ENCODE measurements at regions of chrX and their contacts with region 1.

Region 1: GRCh38 chrX:132292793-132293192 is 73.5 kb upstream of the RAP2C start:
- DNase-seq: peak in 2 of 5 donors; percentile 10 to 16
- ATAC-seq: peak; percentile 51 to 73 (median 70)
- H3K4me3 ChIP-seq: peak overlapping the region in 1 of 12 donors; percentile 5
- H3K27ac ChIP-seq: no peak overlapping the region
- H3K4me1 ChIP-seq: peaks cover 0 to 4% (median 0%) of the 10 kb centered on the region in 12 donors
- H3K27me3 ChIP-seq: peaks cover 0 to 15% (median 0%) of the 10 kb centered on the region in 9 donors
- CTCF ChIP-seq: peak; percentile 38 to 79 (median 61)
- POLR2A ChIP-seq: no peak

Region 2: GRCh38 chrX:131854581-131854980 is 438.2 kb before region 1 on chrX:
- intact Hi-C with region 1: loop called in 1 of 10 experiments (anchors 10 kb)
- DNase-seq: no peak
- ATAC-seq: no peak
- H3K4me3 ChIP-seq: no peak overlapping the region
- H3K27ac ChIP-seq: no peak overlapping the region
- H3K4me1 ChIP-seq: no peaks in the 10 kb centered on the region
- H3K27me3 ChIP-seq: peaks cover 0 to 41% (median 0%) of the 10 kb centered on the region in 9 donors
- CTCF ChIP-seq: no peak
- POLR2A ChIP-seq: no peak

Region 3: GRCh38 chrX:132304599-132304998 is 11.8 kb after region 1 on chrX:
- intact Hi-C with region 1: no loop called
- DNase-seq: no peak
- ATAC-seq: no peak
- H3K4me3 ChIP-seq: no peak overlapping the region
- H3K27ac ChIP-seq: no peak overlapping the region
- H3K4me1 ChIP-seq: no peaks in the 10 kb centered on the region
- H3K27me3 ChIP-seq: peaks cover 0 to 7% (median 0%) of the 10 kb centered on the region in 9 donors
- CTCF ChIP-seq: no peak
- POLR2A ChIP-seq: no peak

Region 4: DNA sequence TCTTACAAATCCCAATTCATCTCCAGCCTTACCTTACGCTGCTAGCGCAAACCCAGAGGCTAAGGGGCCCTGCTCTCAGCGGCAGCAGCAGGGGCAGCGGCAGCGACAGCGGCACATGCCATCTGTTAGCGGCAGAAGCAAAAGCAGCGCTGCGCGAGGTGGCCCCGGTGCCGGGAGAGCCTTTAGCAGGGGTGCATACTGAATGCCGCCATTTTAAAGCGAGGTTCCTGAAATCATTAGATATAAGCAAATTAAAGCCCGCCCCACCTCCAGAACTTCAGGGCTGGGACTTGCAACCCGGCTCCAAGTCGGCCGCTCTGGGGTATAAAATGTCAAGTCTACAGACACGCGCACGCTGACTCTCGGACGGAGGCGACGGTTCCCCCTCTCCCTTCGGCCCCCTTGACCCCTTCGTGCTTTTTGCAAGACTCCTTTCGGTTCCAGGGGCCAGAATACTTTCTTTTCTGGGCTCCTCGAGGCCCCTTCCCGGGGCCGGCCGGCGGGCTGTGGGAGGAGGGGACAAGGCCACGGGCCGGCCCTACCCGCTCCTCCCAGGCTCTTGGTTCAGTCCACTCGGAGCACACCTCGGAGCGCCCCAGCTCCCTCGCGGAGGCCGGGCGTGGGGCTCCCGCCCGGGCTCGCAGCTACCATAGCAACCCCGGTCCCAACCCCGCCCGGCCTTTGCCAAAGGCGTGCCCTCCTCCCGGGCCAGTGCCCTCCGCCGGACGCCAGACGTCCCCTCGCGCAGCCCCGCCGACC is 196.2 kb after region 1 on chrX and contains the start of gene MBNL3:
- intact Hi-C with region 1: loop called in 1 of 10 experiments (anchors 10 kb)
- DNase-seq: peak; percentile 37 to 77 (median 66)
- ATAC-seq: peak; percentile 78 to 95 (median 92)
- H3K4me3 ChIP-seq: peak within 1 kb of the TSS; percentile 23 to 82 (median 63)
- H3K27ac ChIP-seq: peak within 1 kb of the TSS in 11 of 12 donors; percentile 43 to 90 (median 72)
- H3K4me1 ChIP-seq: peaks cover 0 to 18% (median 0%) of the 10 kb centered on the region in 12 donors
- H3K27me3 ChIP-seq: peaks cover 0 to 10% (median 0%) of the 10 kb centered on the region in 9 donors
- CTCF ChIP-seq: no peak
- POLR2A ChIP-seq: no peak
- total RNA-seq, gene MBNL3: 4.6 to 21.9 (median 10.4) TPM

Region 5: GRCh38 chrX:132592880-132593279 is 300.1 kb after region 1 on chrX:
- intact Hi-C with region 1: loop called in 1 of 10 experiments (anchors 5 kb)
- DNase-seq: no peak
- ATAC-seq: no peak
- H3K4me3 ChIP-seq: no peak overlapping the region
- H3K27ac ChIP-seq: no peak overlapping the region
- H3K4me1 ChIP-seq: no peaks in the 10 kb centered on the region
- H3K27me3 ChIP-seq: peaks cover 0 to 39% (median 0%) of the 10 kb centered on the region in 9 donors
- CTCF ChIP-seq: peak in 11 of 12 donors; percentile 6 to 51 (median 31)
- POLR2A ChIP-seq: no peak

Region 6: DNA sequence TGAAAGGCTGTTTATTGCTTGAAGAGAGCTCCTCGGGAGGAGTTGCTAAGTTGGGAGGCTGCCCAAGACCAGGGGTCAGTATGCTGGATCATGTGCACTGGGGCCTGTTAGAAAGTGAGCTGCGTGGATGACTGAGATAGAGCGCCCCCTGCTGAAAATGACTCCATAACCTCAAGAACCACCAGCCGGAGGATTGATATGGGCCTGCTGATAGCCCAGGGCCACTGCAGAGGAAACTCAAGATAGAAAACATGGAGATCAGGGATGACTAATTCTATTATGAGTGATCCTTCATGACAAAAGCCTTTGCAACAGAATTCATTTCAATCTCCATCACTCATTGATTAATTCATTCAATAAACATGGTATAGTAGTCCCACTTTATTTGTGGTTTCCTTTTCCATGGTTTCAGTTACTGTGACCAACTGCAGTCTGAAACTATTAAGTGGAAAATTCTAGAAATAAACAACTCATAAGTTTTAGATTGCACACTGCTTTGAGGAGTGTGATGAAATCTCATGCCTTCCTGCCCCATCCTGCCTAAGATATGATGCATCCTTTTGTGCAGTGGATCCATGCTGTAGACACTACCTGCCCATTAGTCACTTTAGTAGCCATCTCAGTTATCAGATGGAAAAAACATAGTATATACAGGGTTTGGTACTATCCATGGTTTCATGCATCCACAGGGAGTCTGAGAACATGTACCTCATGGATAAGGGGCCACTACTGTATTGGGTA is 322.8 kb after region 1 on chrX:
- intact Hi-C with region 1: loop called in 9 of 10 experiments (anchors 2 to 10 kb)
- DNase-seq: peak in 3 of 5 donors; percentile 8 to 40 (median 19)
- ATAC-seq: no peak
- H3K4me3 ChIP-seq: no peak overlapping the region
- H3K27ac ChIP-seq: no peak overlapping the region
- H3K4me1 ChIP-seq: no peaks in the 10 kb centered on the region
- H3K27me3 ChIP-seq: peaks cover 0 to 32% (median 0%) of the 10 kb centered on the region in 9 donors
- CTCF ChIP-seq: peak; percentile 5 to 48 (median 34)
- POLR2A ChIP-seq: no peak